GM10248 (cell line): ENCODE measurements at regions of chr1 and their contacts with region 1.

Region 1: GRCh38 chr1:155091071-155091709 is 12.6 kb downstream of the EFNA3 start:
- DNase-seq: peak; percentile 84
- CTCF ChIP-seq: peak; percentile 95

Region 2: DNA sequence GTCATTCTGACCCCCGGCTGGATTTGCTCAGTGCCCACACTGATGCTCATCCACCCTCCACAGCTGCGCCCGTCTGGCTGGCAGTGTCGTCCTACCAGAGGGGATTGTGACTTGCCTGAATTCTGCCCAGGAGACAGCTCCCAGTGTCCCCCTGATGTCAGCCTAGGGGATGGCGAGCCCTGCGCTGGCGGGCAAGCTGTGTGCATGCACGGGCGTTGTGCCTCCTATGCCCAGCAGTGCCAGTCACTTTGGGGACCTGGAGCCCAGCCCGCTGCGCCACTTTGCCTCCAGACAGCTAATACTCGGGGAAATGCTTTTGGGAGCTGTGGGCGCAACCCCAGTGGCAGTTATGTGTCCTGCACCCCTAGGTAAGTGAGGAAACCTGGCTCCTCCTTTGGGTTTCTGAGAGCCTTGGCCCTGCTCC is 33.4 kb before region 1 on chr1:
- CTCF ChIA-PET with region 1: interaction called, 169 read pairs
- POLR2A ChIA-PET with region 1: no interaction called
- DNase-seq: no peak
- CTCF ChIP-seq: no peak

Region 3: DNA sequence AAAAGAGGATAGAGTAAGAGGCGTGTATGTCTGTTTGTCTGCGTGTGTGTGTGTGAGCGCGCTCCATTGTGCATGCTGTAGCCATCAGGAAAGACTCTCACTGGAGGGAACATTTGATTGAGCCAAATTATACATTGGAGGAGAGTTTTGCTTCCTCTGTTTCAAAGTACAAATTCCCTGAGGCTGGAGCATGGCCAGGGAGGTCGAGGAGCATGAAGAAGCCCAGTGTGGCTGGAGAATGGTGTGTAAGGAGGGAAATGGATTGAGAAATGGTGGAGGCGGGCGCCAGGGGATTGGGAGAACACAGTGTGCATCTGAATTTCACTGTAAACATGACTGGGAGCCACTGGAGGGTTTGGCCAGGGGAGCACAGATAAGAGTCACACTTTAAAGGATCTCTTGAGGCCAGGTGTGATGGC is 14.4 kb after region 1 on chr1:
- CTCF ChIA-PET with region 1: interaction called, 26 read pairs
- POLR2A ChIA-PET with region 1: no interaction called
- DNase-seq: no peak
- CTCF ChIP-seq: no peak

Region 4: GRCh38 chr1:155128755-155129473 is 37.7 kb after region 1 on chr1:
- CTCF ChIA-PET with region 1: interaction called, 26 read pairs
- POLR2A ChIA-PET with region 1: no interaction called
- DNase-seq: no peak
- CTCF ChIP-seq: no peak

Region 5: GRCh38 chr1:155145491-155145890 is 54.3 kb after region 1 on chr1:
- CTCF ChIA-PET with region 1: interaction called, 24 read pairs
- POLR2A ChIA-PET with region 1: no interaction called
- DNase-seq: no peak
- CTCF ChIP-seq: no peak

Region 6: GRCh38 chr1:155167166-155168104 is 76.2 kb after region 1 on chr1:
- CTCF ChIA-PET with region 1: interaction called, 184 read pairs
- POLR2A ChIA-PET with region 1: interaction called, 7 read pairs
- DNase-seq: peak; percentile 84
- CTCF ChIP-seq: peak; percentile 92